Mammary epithelial cell (primary cell): ENCODE measurements at regions of chr12 and their contacts with region 1.

Region 1: GRCh38 chr12:28130625-28131598 is 59.3 kb upstream of the CCDC91 start:
- DNase-seq: peak; percentile 99
- H3K4me3 ChIP-seq: peak overlapping the region in 1 of 3 experiments; percentile 2
- H3K27ac ChIP-seq: peak overlapping the region; percentile 98
- H3K4me1 ChIP-seq: peaks cover 55% of the 10 kb centered on the region
- H3K27me3 ChIP-seq: no peaks in the 10 kb centered on the region
- CTCF ChIP-seq: no peak

Region 2: DNA sequence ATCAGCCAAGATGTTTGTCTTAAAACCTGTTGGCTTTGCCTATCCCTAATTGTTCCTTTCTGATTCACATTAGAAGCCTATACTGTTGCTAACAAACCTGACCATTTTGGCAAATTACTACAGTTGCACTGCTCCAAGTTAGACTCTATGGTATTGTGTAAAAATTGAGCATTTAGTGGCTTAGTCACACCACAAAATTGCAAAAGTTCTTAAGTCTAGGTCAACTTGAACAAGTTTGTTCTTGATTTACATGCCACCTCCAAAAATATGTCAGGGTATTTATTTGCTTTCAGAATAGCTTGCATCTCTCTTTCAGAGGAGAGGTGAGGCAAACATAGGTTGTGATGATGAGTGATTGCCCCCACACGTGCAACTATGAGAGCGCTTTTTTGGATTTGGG is 131.4 kb before region 1 on chr12:
- CTCF ChIA-PET with region 1: no interaction called
- dilution Hi-C with region 1: no loop called
- in situ Hi-C with region 1: no loop called
- intact Hi-C with region 1: loop called (anchors 1 kb)
- DNase-seq: peak; percentile 97
- H3K4me3 ChIP-seq: no peak overlapping the region
- H3K27ac ChIP-seq: peak overlapping the region; percentile 92
- H3K4me1 ChIP-seq: peaks cover 24% of the 10 kb centered on the region
- H3K27me3 ChIP-seq: no peaks in the 10 kb centered on the region
- CTCF ChIP-seq: no peak

Region 3: DNA sequence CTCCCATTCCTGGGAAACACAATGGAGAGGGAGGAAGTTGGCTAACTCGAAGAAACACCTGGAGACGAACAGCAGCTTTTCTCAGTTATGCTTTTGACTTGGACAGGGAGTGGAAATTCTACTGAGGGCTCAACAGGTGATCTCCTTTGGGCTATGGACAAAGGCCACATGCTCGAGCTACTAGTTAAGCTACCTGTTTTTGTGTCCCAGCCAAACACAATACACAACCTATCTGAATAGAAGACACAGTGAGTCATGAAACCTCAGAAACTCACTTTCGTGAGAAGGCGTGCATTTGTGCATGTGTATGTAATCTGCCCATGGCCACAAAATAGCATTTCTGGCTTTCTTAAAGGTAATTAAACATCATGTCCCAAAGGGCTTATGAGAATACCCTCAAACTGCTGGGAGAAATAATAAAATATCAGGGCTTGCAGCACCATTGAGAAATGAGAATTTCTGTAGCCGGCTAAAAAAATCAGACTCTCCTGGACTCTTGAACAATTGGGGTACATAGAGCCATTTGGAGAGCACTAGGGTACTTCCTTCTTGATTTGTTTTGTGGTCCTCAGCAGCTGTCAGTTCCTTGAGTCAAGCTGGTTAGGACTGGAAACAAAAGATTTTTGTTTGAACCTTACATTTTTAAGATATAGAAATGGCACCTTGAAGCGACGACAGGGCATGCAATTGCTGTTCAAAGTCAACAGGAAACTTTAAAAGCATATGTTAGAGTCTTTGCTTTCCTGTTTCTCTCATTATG is 72.9 kb before region 1 on chr12:
- CTCF ChIA-PET with region 1: no interaction called
- dilution Hi-C with region 1: loop called (anchors 10 kb)
- in situ Hi-C with region 1: no loop called
- intact Hi-C with region 1: loop called (anchors 1 kb)
- DNase-seq: peak; percentile 99
- H3K4me3 ChIP-seq: no peak overlapping the region
- H3K27ac ChIP-seq: peak overlapping the region; percentile 88
- H3K4me1 ChIP-seq: peaks cover 18% of the 10 kb centered on the region
- H3K27me3 ChIP-seq: no peaks in the 10 kb centered on the region
- CTCF ChIP-seq: no peak

Region 4: DNA sequence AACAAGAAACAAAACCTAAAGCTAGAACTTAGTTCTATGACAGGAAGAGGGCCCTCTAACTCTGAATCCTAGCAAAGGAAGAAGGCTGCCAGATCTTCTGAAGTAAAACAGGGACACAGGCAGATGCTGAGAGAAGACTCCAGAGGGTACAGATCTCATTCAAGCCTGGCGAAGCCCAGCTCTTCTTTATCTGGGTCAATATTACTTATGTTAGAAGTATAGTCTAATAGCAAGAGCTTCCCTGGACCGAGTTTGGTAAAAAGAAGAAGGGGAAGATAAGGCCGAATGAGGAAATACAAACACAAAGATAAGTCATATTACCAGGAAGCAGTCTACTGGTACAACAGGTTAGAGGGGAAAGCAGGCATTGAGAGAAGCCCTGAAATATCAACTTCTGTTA is 20.6 kb before region 1 on chr12:
- CTCF ChIA-PET with region 1: no interaction called
- dilution Hi-C with region 1: no loop called
- in situ Hi-C with region 1: no loop called
- intact Hi-C with region 1: loop called (anchors 1 kb)
- DNase-seq: no peak
- H3K4me3 ChIP-seq: no peak overlapping the region
- H3K27ac ChIP-seq: no peak overlapping the region
- H3K4me1 ChIP-seq: peaks cover 23% of the 10 kb centered on the region
- H3K27me3 ChIP-seq: no peaks in the 10 kb centered on the region
- CTCF ChIP-seq: no peak

Region 5: DNA sequence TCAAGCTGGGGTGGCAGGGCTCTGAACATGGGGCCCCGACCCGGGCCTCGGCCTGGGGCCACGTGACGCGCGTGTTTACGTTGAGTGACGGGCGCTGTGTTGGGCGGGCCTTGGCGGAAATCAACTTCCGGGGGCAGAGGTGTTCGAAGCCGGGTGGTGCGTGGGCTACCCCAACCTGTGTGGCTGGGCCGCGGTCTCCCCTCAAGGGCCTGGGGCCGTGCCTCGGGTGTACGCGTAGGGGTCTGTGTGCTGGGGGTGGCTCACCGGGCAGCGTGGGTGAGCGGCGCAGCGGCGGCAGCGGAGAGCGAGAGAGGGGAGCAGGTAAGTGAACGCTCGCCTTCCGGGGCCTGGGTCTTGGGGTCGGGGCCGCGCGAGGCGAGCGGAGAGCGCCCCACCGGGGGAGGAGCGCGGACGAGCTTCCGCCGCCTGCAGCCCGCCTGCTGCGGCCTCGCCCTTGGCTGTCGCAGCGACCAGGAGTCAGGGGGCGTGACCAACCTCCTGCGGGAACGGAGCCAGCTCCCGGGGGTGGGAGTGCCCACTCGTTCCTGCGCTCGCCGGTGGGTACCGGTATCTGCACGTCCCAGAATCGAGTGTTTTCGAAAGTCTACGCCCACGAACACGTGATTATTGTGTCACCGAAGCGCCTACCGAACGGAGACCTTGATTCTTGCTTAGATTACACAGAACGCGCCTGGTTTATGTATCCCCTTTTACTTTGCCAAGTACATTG is 59.6 kb after region 1 on chr12 and contains the start of gene CCDC91:
- CTCF ChIA-PET with region 1: no interaction called
- dilution Hi-C with region 1: no loop called
- in situ Hi-C with region 1: no loop called
- intact Hi-C with region 1: loop called (anchors 1 kb)
- DNase-seq: peak; percentile 86
- H3K4me3 ChIP-seq: peak within 1 kb of the TSS; percentile 72 to 93 (median 88)
- H3K27ac ChIP-seq: peak within 1 kb of the TSS; percentile 96
- H3K4me1 ChIP-seq: peaks cover 16% of the 10 kb centered on the region
- H3K27me3 ChIP-seq: no peaks in the 10 kb centered on the region
- CTCF ChIP-seq: no peak
- total RNA-seq, gene CCDC91: 20.8 to 22.7 TPM